GM10248 (cell line): ENCODE measurements at regions of chr1 and their contacts with region 1.

Region 1: DNA sequence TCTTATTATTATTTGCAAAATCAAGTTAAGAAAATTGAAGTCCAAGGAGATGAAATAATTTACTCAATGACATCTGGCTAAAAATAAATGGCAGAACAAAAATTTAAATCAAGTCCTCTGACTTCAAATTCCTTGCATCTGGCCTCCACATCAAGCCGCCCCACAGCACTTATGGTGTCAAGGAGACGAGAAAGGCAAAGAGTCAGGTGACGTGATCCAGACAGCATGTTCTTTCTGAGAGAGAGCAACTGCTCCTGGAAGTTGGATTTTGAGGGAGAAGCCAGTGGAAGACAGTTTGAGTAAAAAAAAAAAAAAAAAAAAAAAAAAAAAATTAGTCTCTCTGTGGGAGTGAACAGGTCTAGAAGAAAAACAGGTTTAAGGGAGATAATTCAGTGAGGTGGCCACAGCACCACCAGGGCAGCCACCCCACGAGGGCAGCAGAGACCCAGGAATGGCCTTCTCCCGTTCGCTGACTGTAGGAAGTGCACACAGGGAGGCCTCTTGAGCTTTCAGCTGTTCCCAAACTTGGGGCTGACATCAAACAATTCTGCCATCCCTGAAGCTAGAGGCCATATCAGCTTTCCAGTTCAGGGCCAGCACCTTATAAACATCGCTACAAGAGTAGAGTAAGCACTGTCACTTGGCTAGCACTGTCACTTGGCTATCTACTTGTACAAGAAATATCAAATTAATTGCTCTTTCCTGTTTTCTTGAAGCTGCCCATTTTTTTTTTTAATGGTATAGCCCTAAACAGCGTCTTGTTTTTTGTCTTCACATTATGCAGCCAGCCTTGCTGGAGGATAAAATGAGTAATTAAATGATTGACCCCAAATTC is 7.8 kb downstream of the C1orf162 start:
- DNase-seq: peak; percentile 74
- CTCF ChIP-seq: peak; percentile 88

Region 2: GRCh38 chr1:111497592-111497991 is 16.0 kb after region 1 on chr1:
- CTCF ChIA-PET with region 1: interaction called, 75 read pairs
- POLR2A ChIA-PET with region 1: no interaction called
- DNase-seq: no peak
- CTCF ChIP-seq: no peak

Region 3: GRCh38 chr1:111747282-111747734 is 265.7 kb after region 1 on chr1:
- CTCF ChIA-PET with region 1: interaction called, 52 read pairs
- POLR2A ChIA-PET with region 1: no interaction called
- DNase-seq: peak; percentile 73
- CTCF ChIP-seq: peak; percentile 76

Region 4: GRCh38 chr1:111755331-111756123 is 273.9 kb after region 1 on chr1 and contains the start of gene DDX20:
- CTCF ChIA-PET with region 1: interaction called, 27 read pairs
- POLR2A ChIA-PET with region 1: interaction called, 4 read pairs
- DNase-seq: peak; percentile 98
- CTCF ChIP-seq: peak; percentile 91